ENCODE measurements at regions of chr1 and their contacts with region 1.

Region 1: GRCh38 chr1:64242895-64243756 is 39.7 kb downstream of the UBE2U start:
- DNase-seq: no peak
- ATAC-seq: peak in 1 of 2 donors; percentile 51
- H3K4me3 ChIP-seq: no peak overlapping the region
- H3K27ac ChIP-seq: no peak overlapping the region
- H3K4me1 ChIP-seq: no peaks in the 10 kb centered on the region
- H3K27me3 ChIP-seq: no peaks in the 10 kb centered on the region
- CTCF ChIP-seq: peak in 4 of 5 experiments; percentile 27 to 41 (median 37)
- POLR2A ChIP-seq: no peak

Region 2: GRCh38 chr1:63575340-63575826 is 667.7 kb before region 1 on chr1:
- in situ Hi-C with region 1: no loop called
- intact Hi-C with region 1: loop called (anchors 5 kb)
- DNase-seq: no peak
- ATAC-seq: peak; percentile 89 to 94
- H3K4me3 ChIP-seq: no peak overlapping the region
- H3K27ac ChIP-seq: peak overlapping the region in 1 of 4 donors; percentile 33
- H3K4me1 ChIP-seq: peaks cover 0 to 5% of the 10 kb centered on the region in 2 donors
- H3K27me3 ChIP-seq: no peaks in the 10 kb centered on the region
- CTCF ChIP-seq: peak; percentile 71 to 92 (median 82)
- POLR2A ChIP-seq: no peak

Region 3: GRCh38 chr1:63674238-63674864 is 568.8 kb before region 1 on chr1:
- in situ Hi-C with region 1: loop called in 2 of 4 experiments (anchors 10 to 25 kb)
- intact Hi-C with region 1: no loop called
- DNase-seq: peak; percentile 18 to 65
- ATAC-seq: peak; percentile 83 to 88
- H3K4me3 ChIP-seq: no peak overlapping the region
- H3K27ac ChIP-seq: no peak overlapping the region
- H3K4me1 ChIP-seq: no peaks in the 10 kb centered on the region
- H3K27me3 ChIP-seq: no peaks in the 10 kb centered on the region
- CTCF ChIP-seq: peak in 4 of 5 experiments; percentile 15 to 55 (median 34)
- POLR2A ChIP-seq: no peak

Region 4: DNA sequence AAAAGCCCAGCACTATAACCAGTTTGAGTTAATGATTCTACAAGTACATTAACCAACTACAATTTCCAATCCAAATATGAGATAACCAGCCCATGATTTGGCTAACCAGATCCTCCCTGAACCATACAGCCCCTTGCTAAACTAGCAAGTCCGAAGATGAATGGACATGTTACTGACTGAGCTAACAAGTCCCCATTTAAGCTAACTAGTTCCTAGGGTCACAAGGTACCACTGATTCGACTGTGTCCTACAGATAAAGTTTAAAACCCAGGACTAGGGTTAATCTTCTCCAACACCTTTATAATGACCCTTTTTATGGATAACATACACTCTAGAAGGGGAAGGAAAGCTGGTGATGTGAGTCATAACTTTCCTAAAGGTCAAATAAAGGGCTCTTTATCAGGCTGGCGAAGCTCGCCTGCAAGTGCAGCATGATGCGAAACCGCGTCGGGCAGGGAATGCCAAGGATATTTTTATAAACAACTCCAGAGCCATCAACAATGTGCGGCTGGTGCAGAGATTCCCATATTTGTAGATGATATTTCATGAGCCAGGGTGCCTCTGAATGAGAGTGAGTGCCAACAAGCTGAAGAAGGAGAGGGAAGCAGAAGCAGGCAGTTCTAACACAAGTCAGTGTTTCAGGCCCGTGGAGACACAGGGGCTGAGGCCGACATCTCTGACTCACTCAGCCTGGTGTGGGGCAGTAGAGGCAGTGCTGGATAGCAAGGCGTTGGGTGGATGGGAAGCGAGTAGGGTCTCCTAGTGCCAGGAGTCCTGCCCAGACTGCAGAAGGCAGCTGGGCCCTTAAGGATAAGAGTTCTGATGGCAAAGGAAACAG is 544.9 kb before region 1 on chr1:
- in situ Hi-C with region 1: loop called in 3 of 4 experiments (anchors 5 to 25 kb)
- intact Hi-C with region 1: no loop called
- DNase-seq: no peak
- ATAC-seq: no peak
- H3K4me3 ChIP-seq: no peak overlapping the region
- H3K27ac ChIP-seq: peak overlapping the region in 3 of 4 donors; percentile 5 to 22 (median 20)
- H3K4me1 ChIP-seq: peaks cover 0 to 9% of the 10 kb centered on the region in 2 donors
- H3K27me3 ChIP-seq: no peaks in the 10 kb centered on the region
- CTCF ChIP-seq: no peak
- POLR2A ChIP-seq: no peak

Region 5: GRCh38 chr1:64161357-64161941 is 81.7 kb before region 1 on chr1:
- in situ Hi-C with region 1: no loop called
- intact Hi-C with region 1: no loop called
- DNase-seq: peak in 1 of 2 donors; percentile 34
- ATAC-seq: peak; percentile 46 to 57
- H3K4me3 ChIP-seq: no peak overlapping the region
- H3K27ac ChIP-seq: no peak overlapping the region
- H3K4me1 ChIP-seq: peaks cover 7 to 10% of the 10 kb centered on the region in 2 donors
- H3K27me3 ChIP-seq: no peaks in the 10 kb centered on the region
- CTCF ChIP-seq: no peak
- POLR2A ChIP-seq: no peak

Region 6: GRCh38 chr1:64459743-64460142 is 216.6 kb after region 1 on chr1:
- in situ Hi-C with region 1: no loop called
- intact Hi-C with region 1: no loop called
- DNase-seq: no peak
- ATAC-seq: no peak
- H3K4me3 ChIP-seq: no peak overlapping the region
- H3K27ac ChIP-seq: no peak overlapping the region
- H3K4me1 ChIP-seq: no peaks in the 10 kb centered on the region
- H3K27me3 ChIP-seq: no peaks in the 10 kb centered on the region
- CTCF ChIP-seq: no peak
- POLR2A ChIP-seq: no peak

Measured in gastrocnemius medialis (tissue), 4 donors.